PC-3 (cell line): ENCODE measurements at regions of chr22 and their contacts with region 1.

Region 1: DNA sequence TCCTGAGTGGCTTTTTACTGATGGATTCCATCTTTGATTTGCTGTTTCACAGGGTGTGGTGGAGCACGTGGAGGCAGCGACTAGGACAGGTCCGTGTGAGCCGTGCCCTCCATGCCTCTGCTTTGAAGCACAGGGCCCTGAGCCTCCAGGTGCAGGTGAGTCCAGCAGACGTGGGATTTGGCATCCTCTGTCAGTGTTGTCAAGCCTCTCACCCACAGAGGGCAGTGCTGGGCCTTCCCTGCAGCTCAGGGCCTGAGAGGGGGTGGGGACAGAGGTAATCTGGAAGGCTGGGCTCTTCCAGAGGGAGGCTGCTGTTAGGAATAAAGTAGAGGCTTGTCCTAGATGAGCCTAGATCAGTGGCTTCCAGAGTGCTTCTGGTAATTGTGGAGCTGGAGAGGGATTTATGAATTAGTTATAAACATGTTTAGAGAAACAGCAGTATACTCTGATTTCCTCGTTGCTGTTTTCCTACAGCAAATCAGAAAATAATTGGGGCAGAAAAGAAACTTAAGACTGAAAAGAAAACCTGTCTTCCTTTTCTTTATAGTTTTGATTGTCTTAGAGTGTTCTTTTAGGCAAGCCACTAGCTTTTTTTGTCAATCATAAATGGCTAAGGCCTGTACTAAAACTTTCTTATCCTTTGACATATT is 65.0 kb downstream of the SFI1 start:
- DNase-seq: peak; percentile 80
- ATAC-seq: peak; percentile 99
- H3K4me3 ChIP-seq: no peak overlapping the region
- H3K27ac ChIP-seq: no peak overlapping the region
- H3K4me1 ChIP-seq: no peaks in the 10 kb centered on the region
- H3K27me3 ChIP-seq: no peaks in the 10 kb centered on the region
- CTCF ChIP-seq: peak; percentile 74

Region 2: GRCh38 chr22:31602259-31602952 is 41.0 kb after region 1 on chr22:
- CTCF ChIA-PET with region 1: no interaction called
- POLR2A ChIA-PET with region 1: interaction called, 7 read pairs
- intact Hi-C with region 1: loop called (anchors 1 kb)
- DNase-seq: peak; percentile 86
- ATAC-seq: peak; percentile 95
- H3K4me3 ChIP-seq: no peak overlapping the region
- H3K27ac ChIP-seq: peak overlapping the region; percentile 45
- H3K4me1 ChIP-seq: peaks cover 14% of the 10 kb centered on the region
- H3K27me3 ChIP-seq: no peaks in the 10 kb centered on the region
- CTCF ChIP-seq: no peak

Region 3: DNA sequence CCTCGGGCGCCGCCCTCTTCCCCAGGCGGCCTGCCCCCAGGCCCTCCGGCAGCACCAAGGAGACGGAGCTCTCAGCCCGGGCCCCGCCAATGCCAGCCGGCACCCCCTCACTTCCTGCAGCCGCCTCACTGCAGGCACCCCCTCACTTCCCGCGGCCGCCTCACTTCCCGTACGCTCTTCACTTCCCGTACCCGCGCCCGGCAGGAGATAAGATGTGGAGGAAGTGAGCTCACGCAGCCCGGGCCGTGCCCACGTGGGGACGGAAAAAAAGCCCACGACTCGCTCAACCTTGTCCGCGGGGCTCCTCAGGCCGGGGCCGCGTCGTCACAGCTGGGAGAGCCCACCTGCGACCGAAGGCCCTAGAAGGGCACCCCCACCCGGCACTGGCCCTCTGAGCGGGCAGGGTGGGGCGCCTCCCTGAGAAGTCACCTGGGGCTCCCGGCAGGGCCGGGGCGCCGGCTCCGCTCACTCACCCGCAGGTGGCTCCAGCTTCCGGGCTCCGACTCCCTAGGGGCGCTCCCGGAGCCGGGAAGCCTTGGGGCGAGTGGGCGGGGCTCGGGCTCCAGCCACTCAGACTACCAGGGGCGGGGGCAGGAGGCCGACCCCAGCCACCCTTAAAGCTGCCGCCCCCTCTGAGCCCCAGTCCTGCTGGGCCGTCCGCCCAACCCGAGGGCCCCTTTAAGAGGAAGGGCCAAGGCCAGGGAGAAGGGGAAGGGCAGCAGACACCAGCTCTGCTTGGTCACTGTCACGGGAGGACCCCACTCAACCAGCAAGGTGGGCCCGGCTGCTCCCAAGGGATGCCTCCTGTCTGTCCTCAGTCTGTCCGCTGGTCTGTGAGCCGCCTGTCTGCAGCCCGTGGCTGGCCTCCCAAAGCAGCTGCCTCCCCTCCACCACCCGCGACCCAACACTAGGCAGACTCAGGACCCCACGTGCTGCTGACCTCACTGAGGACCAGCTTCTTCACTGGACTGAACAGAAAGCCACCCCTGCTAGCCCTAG is 69.3 kb after region 1 on chr22:
- CTCF ChIA-PET with region 1: interaction called, 7 read pairs
- POLR2A ChIA-PET with region 1: interaction called, 3 read pairs
- intact Hi-C with region 1: loop called (anchors 1 kb)
- DNase-seq: peak; percentile 71
- ATAC-seq: peak; percentile 79
- H3K4me3 ChIP-seq: peak overlapping the region; percentile 85
- H3K27ac ChIP-seq: peak overlapping the region; percentile 81
- H3K4me1 ChIP-seq: no peaks in the 10 kb centered on the region; the same call in 1 of the 2 replicates
- H3K27me3 ChIP-seq: no peaks in the 10 kb centered on the region
- CTCF ChIP-seq: no peak

Region 4: DNA sequence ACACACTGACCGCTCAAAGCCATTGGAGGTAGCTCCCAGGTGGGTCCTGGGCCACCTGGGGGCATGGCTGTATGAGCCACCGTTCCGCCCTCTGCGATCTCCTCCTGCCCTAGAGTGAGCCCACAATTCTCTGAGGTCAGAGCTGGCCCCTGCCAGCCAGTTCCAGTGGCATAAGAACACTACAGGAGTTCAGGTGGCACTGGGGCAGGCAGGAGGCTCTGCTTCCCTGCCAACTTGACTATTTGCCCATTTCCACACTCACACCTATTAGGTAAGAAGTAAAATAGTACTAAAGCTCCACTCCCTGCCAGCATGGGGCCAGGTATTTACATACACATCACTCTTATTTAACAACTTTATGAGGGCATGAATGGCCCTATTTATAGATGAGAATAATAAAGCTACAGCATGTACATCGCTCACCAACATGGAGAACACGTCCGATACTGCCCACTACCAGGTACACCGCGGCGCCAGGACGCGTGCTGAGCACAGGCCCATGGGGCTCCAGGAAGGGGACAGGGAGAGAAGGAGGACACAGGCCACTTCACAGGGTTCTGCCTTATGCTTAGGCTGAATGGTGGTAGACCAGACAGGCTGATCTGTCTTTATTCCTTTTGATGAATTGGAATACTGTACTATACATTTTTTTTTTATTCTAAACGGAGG is 74.4 kb after region 1 on chr22:
- CTCF ChIA-PET with region 1: interaction called, 7 read pairs
- POLR2A ChIA-PET with region 1: interaction called, 3 read pairs
- intact Hi-C with region 1: loop called (anchors 1 kb)
- DNase-seq: no peak
- ATAC-seq: peak; percentile 24; the same call in 1 of the 2 replicates
- H3K4me3 ChIP-seq: no peak overlapping the region
- H3K27ac ChIP-seq: no peak overlapping the region
- H3K4me1 ChIP-seq: no peaks in the 10 kb centered on the region
- H3K27me3 ChIP-seq: no peaks in the 10 kb centered on the region
- CTCF ChIP-seq: no peak